Body of pancreas (tissue), 4 donors: ENCODE measurements at regions of chr10 and their contacts with region 1.

Region 1: GRCh38 chr10:60123172-60124067 is 217.1 kb upstream of the CCDC6 start:
- DNase-seq: no peak
- ATAC-seq: peak; percentile 38
- H3K4me3 ChIP-seq: no peak overlapping the region
- H3K27ac ChIP-seq: peak overlapping the region in 1 of 4 donors; percentile 1
- H3K4me1 ChIP-seq: no peaks in the 10 kb centered on the region
- H3K27me3 ChIP-seq: no peaks in the 10 kb centered on the region
- CTCF ChIP-seq: no peak
- POLR2A ChIP-seq: no peak

Region 2: GRCh38 chr10:60189861-60190475 is 66.5 kb after region 1 on chr10:
- intact Hi-C with region 1: loop called (anchors 10 kb)
- DNase-seq: no peak
- ATAC-seq: no peak
- H3K4me3 ChIP-seq: no peak overlapping the region
- H3K27ac ChIP-seq: no peak overlapping the region
- H3K4me1 ChIP-seq: no peaks in the 10 kb centered on the region
- H3K27me3 ChIP-seq: no peaks in the 10 kb centered on the region
- CTCF ChIP-seq: no peak
- POLR2A ChIP-seq: no peak

Region 3: GRCh38 chr10:60282771-60283353 is 159.4 kb after region 1 on chr10:
- intact Hi-C with region 1: no loop called
- DNase-seq: peak in 3 of 4 donors; percentile 18 to 54 (median 33)
- ATAC-seq: peak; percentile 94
- H3K4me3 ChIP-seq: no peak overlapping the region
- H3K27ac ChIP-seq: peak overlapping the region in 3 of 4 donors; percentile 60 to 67 (median 66)
- H3K4me1 ChIP-seq: peaks cover 23% of the 10 kb centered on the region
- H3K27me3 ChIP-seq: no peaks in the 10 kb centered on the region
- CTCF ChIP-seq: no peak
- POLR2A ChIP-seq: no peak